Head of caudate nucleus (tissue), 42 donors: ENCODE measurements at regions of chr13 and their contacts with region 1.

Region 1: GRCh38 chr13:29508130-29508875 is 87.2 kb downstream of the SLC7A1 start:
- DNase-seq: peak; percentile 61 to 96 (median 90)

Region 2: GRCh38 chr13:29713839-29714238 is 205.5 kb after region 1 on chr13:
- intact Hi-C with region 1: loop called (anchors 10 kb)
- DNase-seq: no peak

Region 3: GRCh38 chr13:29956853-29957252 is 448.6 kb after region 1 on chr13:
- intact Hi-C with region 1: no loop called
- DNase-seq: no peak